ENCODE measurements at regions of chr7 and their contacts with region 1.

Region 1: DNA sequence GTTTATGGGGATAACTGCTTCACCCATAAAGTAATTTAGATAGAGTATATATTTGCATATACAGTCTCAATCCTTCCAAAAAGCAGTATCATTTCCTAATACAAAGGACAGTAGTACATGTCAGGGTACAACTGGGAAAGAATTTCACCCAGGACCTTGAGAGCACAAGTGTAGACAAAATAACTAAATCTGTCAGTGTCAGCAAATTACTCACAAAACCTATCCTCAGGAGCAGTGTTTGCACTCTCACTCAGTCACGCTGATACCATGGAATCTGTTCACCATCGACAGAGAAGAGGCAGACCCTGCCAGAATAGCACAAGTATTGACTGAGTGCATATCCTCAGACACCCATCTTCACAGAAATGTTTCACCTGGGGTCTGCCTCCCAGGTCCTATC is 554.7 kb upstream of the PHF14 start:
- DNase-seq: no peak
- ATAC-seq: no peak
- H3K4me3 ChIP-seq: no peak overlapping the region
- H3K27ac ChIP-seq: no peak overlapping the region
- H3K4me1 ChIP-seq: no peaks in the 10 kb centered on the region
- H3K27me3 ChIP-seq: peaks cover 0 to 3% (median 0%) of the 10 kb centered on the region in 9 donors
- CTCF ChIP-seq: no peak
- POLR2A ChIP-seq: no peak

Region 2: GRCh38 chr7:10022957-10023356 is 396.0 kb before region 1 on chr7:
- intact Hi-C with region 1: loop called in 7 of 10 experiments (anchors 5 kb)
- DNase-seq: peak in 1 of 5 donors; percentile 9
- ATAC-seq: peak in 2 of 4 donors; percentile 62 to 65
- H3K4me3 ChIP-seq: no peak overlapping the region
- H3K27ac ChIP-seq: no peak overlapping the region
- H3K4me1 ChIP-seq: no peaks in the 10 kb centered on the region
- H3K27me3 ChIP-seq: no peaks in the 10 kb centered on the region
- CTCF ChIP-seq: peak in 11 of 12 donors; percentile 18 to 62 (median 46)
- POLR2A ChIP-seq: no peak

Region 3: GRCh38 chr7:10225275-10225674 is 193.7 kb before region 1 on chr7:
- intact Hi-C with region 1: no loop called
- DNase-seq: no peak
- ATAC-seq: peak in 2 of 4 donors; percentile 51 to 63
- H3K4me3 ChIP-seq: peak overlapping the region in 1 of 12 donors; percentile 0
- H3K27ac ChIP-seq: peak overlapping the region in 5 of 12 donors; percentile 11 to 48 (median 28)
- H3K4me1 ChIP-seq: peaks cover 0 to 29% (median 10%) of the 10 kb centered on the region in 12 donors
- H3K27me3 ChIP-seq: no peaks in the 10 kb centered on the region
- CTCF ChIP-seq: no peak
- POLR2A ChIP-seq: no peak